Left ventricle myocardium superior (tissue), 1 donor: ENCODE measurements at regions of chr18 and their contacts with region 1.

Region 1: GRCh38 chr18:9771261-9771976 is 63.3 kb downstream of the RAB31 start:
- DNase-seq: peak; percentile 90
- ATAC-seq: peak; percentile 94

Region 2: GRCh38 chr18:9673296-9674251 is 97.8 kb before region 1 on chr18:
- intact Hi-C with region 1: no loop called
- DNase-seq: no peak
- ATAC-seq: peak; percentile 96

Region 3: DNA sequence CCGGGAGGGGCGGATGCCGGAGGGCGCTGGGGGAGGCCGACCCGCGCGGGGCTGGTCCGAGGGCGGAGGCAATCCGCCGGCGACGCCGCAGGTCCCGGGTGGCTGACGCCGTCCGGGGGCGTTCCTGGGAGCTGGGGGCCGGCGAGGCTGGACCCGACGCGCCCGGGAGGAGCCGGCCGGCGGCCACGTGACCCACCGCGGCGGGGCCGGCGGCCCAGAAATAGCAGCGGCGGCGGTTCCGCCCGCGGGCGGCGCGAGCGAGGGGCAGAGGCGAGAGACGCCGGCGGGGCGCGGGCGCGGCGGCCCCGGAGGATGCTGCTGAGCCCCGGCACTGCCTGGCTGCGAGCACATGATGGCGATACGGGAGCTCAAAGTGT is 63.4 kb before region 1 on chr18 and contains the start of gene RAB31:
- intact Hi-C with region 1: loop called (anchors 10 kb)
- DNase-seq: peak; percentile 90
- ATAC-seq: peak; percentile 95
- total RNA-seq, gene RAB31: 7.6 TPM

Region 4: GRCh38 chr18:9849407-9850281 is 78.2 kb after region 1 on chr18:
- intact Hi-C with region 1: no loop called
- DNase-seq: peak; percentile 61
- ATAC-seq: peak; percentile 78